Natural killer cell (primary cell): ENCODE measurements at regions of chr4 and their contacts with region 1.

Region 1: GRCh38 chr4:152640058-152640833 is 39.6 kb downstream of the TMEM154 start:
- DNase-seq: peak in 1 of 2 donors; percentile 51
- ATAC-seq: peak in 2 of 3 donors; percentile 33 to 50
- H3K4me3 ChIP-seq: no peak overlapping the region
- H3K4me3 Mint-ChIP-seq: no peak overlapping the region
- H3K27ac ChIP-seq: no peak overlapping the region
- H3K27ac Mint-ChIP-seq: no peak overlapping the region
- H3K4me1 ChIP-seq: peaks cover 18% of the 10 kb centered on the region
- H3K4me1 Mint-ChIP-seq: peaks cover 0 to 15% of the 10 kb centered on the region in 2 donors
- H3K27me3 ChIP-seq: no peaks in the 10 kb centered on the region
- H3K27me3 Mint-ChIP-seq: no peaks in the 10 kb centered on the region
- CTCF ChIP-seq: peak; percentile 81

Region 2: DNA sequence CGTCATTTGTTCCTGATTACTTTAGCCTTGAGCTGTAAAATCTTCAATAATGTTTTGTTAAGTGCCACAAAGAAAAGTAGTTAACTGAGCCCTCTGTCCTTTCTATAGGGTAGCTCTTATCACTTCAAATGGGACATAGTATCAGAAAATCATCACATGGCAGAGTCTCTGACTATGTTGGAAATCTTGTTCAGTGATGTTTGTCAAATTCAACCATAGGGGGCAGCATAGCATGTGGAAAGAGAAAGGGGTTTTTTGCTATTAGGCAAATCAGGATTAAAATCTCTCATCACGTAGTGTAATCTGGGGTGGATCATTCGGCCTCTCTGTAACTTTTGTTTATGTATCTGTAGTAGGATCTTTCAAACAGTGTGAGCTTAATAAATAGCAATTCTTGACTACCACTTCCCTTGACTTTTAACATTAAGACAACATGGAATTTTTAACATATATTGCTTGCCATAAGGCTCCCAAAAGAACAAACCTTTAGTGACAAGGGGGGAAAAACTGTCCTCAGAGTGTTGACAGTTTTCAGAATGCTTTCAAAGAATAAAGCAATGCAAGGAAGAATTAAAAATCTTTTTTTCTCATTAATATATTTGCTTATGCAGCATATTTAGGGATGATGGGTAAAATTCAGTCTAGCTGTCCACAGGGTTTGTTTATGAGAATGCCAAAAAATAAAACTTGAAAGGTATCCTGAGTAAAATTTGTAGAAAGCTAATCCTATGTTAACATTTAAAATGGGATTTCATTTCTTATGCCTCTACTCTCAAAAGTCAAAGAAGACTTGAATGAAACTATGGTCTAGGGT is 231.5 kb before region 1 on chr4:
- intact Hi-C with region 1: loop called (anchors 1 kb)
- DNase-seq: peak in 1 of 2 donors; percentile 66
- ATAC-seq: peak; percentile 55 to 73 (median 63)
- H3K4me3 ChIP-seq: no peak overlapping the region
- H3K4me3 Mint-ChIP-seq: no peak overlapping the region
- H3K27ac ChIP-seq: no peak overlapping the region
- H3K27ac Mint-ChIP-seq: peak overlapping the region; percentile 64 to 67
- H3K4me1 ChIP-seq: no peaks in the 10 kb centered on the region
- H3K4me1 Mint-ChIP-seq: peaks cover 18 to 28% of the 10 kb centered on the region in 2 donors
- H3K27me3 ChIP-seq: no peaks in the 10 kb centered on the region
- H3K27me3 Mint-ChIP-seq: no peaks in the 10 kb centered on the region
- CTCF ChIP-seq: peak; percentile 36

Region 3: DNA sequence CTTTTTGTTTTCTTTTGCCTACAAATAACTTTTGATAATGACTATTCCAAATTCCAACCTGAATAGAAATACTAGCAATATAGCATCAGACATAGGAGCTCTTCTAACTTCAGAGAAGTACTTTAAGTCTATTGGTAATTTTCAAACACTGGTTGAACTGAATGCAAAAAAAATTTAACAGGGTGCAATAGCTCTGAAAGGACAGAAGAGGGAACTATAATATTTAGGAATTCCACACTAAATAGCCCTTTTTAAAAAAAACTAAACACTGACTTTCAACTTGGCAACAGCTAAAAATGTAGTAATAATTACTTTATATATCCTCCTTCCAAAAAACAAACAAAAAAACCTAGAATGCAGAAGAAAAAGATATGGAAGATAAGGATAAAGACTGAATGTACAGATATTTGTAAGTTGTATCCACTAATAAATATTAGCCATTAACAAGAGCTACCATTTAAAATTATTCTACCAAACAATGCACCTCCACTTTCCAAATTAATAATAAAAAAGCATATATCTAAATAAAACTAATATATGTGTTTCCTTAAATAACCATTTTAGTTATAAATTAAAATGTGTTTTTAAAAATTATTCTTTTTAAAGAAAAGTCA is 185.7 kb before region 1 on chr4:
- intact Hi-C with region 1: loop called (anchors 2 kb)
- DNase-seq: peak in 1 of 2 donors; percentile 11
- ATAC-seq: peak in 1 of 3 donors; percentile 28
- H3K4me3 ChIP-seq: no peak overlapping the region
- H3K4me3 Mint-ChIP-seq: peak overlapping the region; percentile 38
- H3K27ac ChIP-seq: no peak overlapping the region
- H3K27ac Mint-ChIP-seq: no peak overlapping the region
- H3K4me1 ChIP-seq: peaks cover 12% of the 10 kb centered on the region
- H3K4me1 Mint-ChIP-seq: peaks cover 39 to 47% of the 10 kb centered on the region in 2 donors
- H3K27me3 ChIP-seq: no peaks in the 10 kb centered on the region
- H3K27me3 Mint-ChIP-seq: no peaks in the 10 kb centered on the region
- CTCF ChIP-seq: peak; percentile 44

Region 4: DNA sequence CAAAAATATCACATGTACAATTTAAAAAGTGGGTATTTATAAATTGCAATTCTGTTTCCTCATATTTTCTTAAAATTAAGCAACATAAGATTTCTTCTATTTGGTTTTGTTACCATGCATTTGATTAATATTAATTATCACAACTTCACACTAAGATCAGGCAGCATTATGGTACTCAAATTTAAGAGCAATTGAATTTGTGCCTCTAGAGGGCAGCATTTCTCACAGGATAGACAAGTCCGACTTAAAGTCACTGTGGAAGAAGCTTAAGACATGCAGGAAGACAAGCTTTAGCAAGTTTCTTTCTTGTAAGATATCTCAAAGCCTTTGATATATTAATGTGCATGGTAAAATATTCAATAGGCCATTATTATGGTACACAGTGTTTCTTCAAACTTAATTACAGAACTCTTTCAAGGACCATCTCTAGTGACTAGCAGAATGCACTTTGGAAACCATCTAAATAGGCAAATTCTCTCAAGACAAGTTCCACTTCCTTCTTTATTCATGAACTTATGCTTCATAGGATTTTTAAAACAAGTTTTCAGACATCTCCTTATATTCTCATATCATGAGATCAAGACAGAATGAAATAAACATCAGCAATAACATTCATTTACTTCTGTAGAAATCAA is 139.3 kb before region 1 on chr4:
- intact Hi-C with region 1: loop called (anchors 1 kb)
- DNase-seq: peak in 1 of 2 donors; percentile 92
- ATAC-seq: peak; percentile 82 to 89 (median 88)
- H3K4me3 ChIP-seq: no peak overlapping the region
- H3K4me3 Mint-ChIP-seq: no peak overlapping the region
- H3K27ac ChIP-seq: no peak overlapping the region
- H3K27ac Mint-ChIP-seq: peak overlapping the region in 1 of 2 donors; percentile 60
- H3K4me1 ChIP-seq: peaks cover 4% of the 10 kb centered on the region
- H3K4me1 Mint-ChIP-seq: peaks cover 44 to 48% of the 10 kb centered on the region in 2 donors
- H3K27me3 ChIP-seq: no peaks in the 10 kb centered on the region
- H3K27me3 Mint-ChIP-seq: no peaks in the 10 kb centered on the region
- CTCF ChIP-seq: peak; percentile 91

Region 5: DNA sequence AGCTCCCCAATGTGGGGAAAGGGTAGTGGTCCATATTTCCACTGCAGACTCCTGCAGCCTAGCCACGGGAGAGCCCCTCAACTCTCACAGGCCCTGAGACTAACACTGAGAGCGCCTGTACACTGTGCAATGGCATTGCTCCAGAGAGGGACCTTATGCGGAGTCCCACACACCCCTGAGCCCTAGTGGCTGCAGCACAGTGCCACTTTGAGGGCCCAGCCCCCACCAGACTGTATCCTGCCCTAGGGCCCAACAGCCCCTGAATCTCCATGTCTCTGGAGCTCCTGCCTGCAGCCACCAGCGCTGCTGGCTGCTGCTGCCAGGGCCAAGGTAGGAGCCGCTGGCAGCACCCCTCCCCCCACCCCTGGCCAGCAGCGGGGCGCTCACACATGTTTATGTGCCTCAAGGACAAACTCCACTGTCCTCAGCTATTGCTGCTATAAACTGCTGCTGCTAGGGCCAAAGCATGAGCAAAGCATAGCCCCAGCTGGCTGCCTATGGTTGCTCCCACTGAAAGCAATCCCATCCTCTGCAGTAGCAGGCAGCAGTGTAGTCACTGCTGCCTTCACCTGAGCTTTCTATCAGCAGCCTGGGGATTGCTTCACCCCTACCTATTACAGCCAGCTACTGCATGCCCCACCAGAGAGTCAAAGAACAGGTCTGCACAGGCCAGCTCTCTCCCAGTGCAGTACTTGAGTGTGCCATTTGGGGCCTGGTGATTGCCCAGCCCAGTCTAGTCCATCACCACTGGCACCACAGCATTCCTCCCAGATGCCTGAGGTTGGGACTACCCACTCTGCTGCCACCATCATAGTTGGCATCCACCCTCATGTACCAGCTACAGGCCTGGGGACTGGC is 15.3 kb after region 1 on chr4:
- intact Hi-C with region 1: no loop called
- DNase-seq: no peak
- ATAC-seq: no peak
- H3K4me3 ChIP-seq: no peak overlapping the region
- H3K4me3 Mint-ChIP-seq: no peak overlapping the region
- H3K27ac ChIP-seq: no peak overlapping the region
- H3K27ac Mint-ChIP-seq: no peak overlapping the region
- H3K4me1 ChIP-seq: no peaks in the 10 kb centered on the region
- H3K4me1 Mint-ChIP-seq: peaks cover 0 to 18% of the 10 kb centered on the region in 2 donors
- H3K27me3 ChIP-seq: no peaks in the 10 kb centered on the region
- H3K27me3 Mint-ChIP-seq: no peaks in the 10 kb centered on the region
- CTCF ChIP-seq: no peak